ENCODE measurements at regions of chr6 and their contacts with region 1.

Region 1: GRCh38 chr6:41683510-41684310 is 45.4 kb downstream of the MDFI start:
- DNase-seq: peak; percentile 81 to 86
- ATAC-seq: peak; percentile 81 to 89 (median 85)
- H3K4me3 ChIP-seq: peak overlapping the region; percentile 15 to 68 (median 54)
- H3K27ac ChIP-seq: peak overlapping the region; percentile 53 to 97 (median 86)
- H3K4me1 ChIP-seq: peaks cover 5 to 37% (median 23%) of the 10 kb centered on the region in 9 donors
- H3K27me3 ChIP-seq: no peaks in the 10 kb centered on the region
- CTCF ChIP-seq: peak; percentile 88 to 97 (median 96)

Region 2: GRCh38 chr6:41306187-41306854 is 377.4 kb before region 1 on chr6:
- intact Hi-C with region 1: loop called in 1 of 10 experiments (anchors 5 kb)
- DNase-seq: no peak
- ATAC-seq: no peak
- H3K4me3 ChIP-seq: no peak overlapping the region
- H3K27ac ChIP-seq: no peak overlapping the region
- H3K4me1 ChIP-seq: peaks cover 0 to 6% (median 0%) of the 10 kb centered on the region in 9 donors
- H3K27me3 ChIP-seq: peaks cover 0 to 40% (median 26%) of the 10 kb centered on the region in 7 donors
- CTCF ChIP-seq: peak in 8 of 9 donors; percentile 28 to 66 (median 60)

Region 3: GRCh38 chr6:41318654-41319565 is 364.8 kb before region 1 on chr6:
- intact Hi-C with region 1: no loop called
- DNase-seq: peak; percentile 63 to 82
- ATAC-seq: peak; percentile 90 to 98 (median 94)
- H3K4me3 ChIP-seq: peak overlapping the region in 7 of 10 donors; percentile 9 to 36 (median 33)
- H3K27ac ChIP-seq: no peak overlapping the region
- H3K4me1 ChIP-seq: peaks cover 0 to 11% (median 6%) of the 10 kb centered on the region in 9 donors
- H3K27me3 ChIP-seq: peaks cover 0 to 72% (median 61%) of the 10 kb centered on the region in 7 donors
- CTCF ChIP-seq: peak; percentile 99 to 100 (median 100)

Region 4: DNA sequence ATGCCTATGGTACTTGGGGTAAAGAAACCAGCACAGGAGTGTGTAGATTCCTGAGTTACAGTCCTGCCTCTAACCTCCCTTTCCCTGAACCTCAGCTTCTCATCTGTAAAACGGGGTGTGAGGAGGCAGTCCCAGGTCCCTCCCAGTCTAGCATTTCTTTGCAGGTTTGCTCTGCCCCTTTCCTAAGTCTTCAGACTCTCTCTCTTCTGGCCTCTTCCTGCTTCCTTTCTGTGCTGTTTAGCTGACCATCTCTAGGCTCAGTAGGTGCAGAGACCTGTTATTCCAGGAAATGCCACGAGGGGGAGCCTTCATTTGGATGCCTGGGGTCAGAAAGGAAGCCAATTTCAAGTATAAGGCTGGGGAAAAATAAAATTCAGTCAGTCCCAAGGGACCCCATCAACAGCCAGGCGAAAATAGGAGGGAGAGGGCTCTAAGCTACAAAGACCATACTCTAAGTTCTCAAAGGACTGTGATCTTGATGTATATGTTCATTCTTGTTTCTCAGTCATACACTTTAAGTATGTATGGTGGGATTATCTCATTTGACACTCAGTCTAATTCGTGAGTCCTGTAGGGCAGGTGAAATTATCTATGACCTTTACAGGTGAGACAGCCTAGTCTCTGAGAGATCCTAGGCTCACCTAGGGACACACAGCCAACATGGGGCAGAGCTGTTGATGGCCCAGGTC is 259.2 kb before region 1 on chr6:
- intact Hi-C with region 1: loop called in 1 of 10 experiments (anchors 5 kb)
- DNase-seq: peak; percentile 58 to 88
- ATAC-seq: peak in 6 of 8 donors; percentile 34 to 67 (median 46)
- H3K4me3 ChIP-seq: no peak overlapping the region
- H3K27ac ChIP-seq: no peak overlapping the region
- H3K4me1 ChIP-seq: peaks cover 3 to 39% (median 28%) of the 10 kb centered on the region in 9 donors
- H3K27me3 ChIP-seq: peaks cover 0 to 51% (median 15%) of the 10 kb centered on the region in 7 donors
- CTCF ChIP-seq: peak; percentile 62 to 91 (median 85)

Region 5: GRCh38 chr6:41463062-41463930 is 220.4 kb before region 1 on chr6:
- intact Hi-C with region 1: loop called in 8 of 10 experiments (anchors 5 to 10 kb)
- DNase-seq: peak; percentile 74
- ATAC-seq: peak; percentile 85 to 96 (median 91)
- H3K4me3 ChIP-seq: no peak overlapping the region
- H3K27ac ChIP-seq: no peak overlapping the region
- H3K4me1 ChIP-seq: peaks cover 0 to 4% (median 0%) of the 10 kb centered on the region in 9 donors
- H3K27me3 ChIP-seq: peaks cover 0 to 13% (median 4%) of the 10 kb centered on the region in 7 donors
- CTCF ChIP-seq: peak; percentile 45 to 85 (median 76)

Region 6: DNA sequence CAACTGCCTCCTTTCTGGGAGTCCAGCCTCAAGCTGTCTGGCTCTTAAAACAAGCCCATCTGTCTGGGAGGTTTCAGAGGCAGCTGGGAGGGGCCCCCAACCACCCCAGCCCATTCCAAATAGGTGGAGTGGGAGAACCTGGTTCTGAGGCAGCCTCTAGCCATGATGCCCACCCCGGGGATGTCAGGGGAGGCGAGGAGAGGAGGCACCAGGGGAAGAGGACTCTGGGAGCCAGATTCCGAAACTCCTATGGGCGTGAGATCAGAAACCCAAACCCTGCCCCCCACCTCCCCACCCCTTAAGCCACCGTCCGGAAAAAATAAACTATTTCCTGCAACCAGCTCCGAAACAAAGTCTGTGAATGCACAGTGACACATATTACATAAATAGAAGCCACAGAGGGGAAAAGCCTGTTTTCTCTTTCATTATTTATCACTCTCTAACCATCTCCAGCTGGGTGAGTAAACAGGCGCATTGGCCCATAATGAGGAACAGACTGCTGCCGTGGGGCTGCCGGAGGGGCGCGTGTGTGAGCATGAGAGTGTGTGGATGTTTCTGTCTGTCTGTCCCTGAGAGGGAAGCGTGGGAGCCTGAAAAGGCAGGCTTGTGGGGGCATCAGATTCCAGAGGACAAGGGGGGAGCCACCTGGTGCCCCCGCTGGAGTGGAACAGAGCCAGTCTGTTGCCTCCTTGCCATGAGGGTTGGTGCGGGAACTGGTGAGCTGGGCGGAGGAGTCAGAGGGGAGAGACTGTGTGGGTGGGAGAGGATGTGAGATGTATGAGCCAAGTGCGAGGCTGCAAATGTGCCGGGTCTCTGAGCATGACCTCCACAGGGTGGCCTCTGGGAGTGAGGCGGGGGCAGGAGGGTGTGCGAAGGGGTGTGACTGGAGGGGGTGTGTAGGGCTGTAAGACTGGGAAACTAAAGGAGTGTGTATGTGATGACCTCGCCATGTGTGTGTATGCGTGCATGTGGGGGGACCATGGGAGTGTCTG is 151.8 kb before region 1 on chr6:
- intact Hi-C with region 1: no loop called
- DNase-seq: no peak
- ATAC-seq: peak in 4 of 8 donors; percentile 35 to 51 (median 38)
- H3K4me3 ChIP-seq: peak overlapping the region in 4 of 10 donors; percentile 8 to 26 (median 18)
- H3K27ac ChIP-seq: peak overlapping the region in 1 of 10 donors; percentile 20
- H3K4me1 ChIP-seq: peaks cover 0 to 25% (median 17%) of the 10 kb centered on the region in 9 donors
- H3K27me3 ChIP-seq: peaks cover 0 to 69% (median 44%) of the 10 kb centered on the region in 7 donors
- CTCF ChIP-seq: no peak

Region 7: DNA sequence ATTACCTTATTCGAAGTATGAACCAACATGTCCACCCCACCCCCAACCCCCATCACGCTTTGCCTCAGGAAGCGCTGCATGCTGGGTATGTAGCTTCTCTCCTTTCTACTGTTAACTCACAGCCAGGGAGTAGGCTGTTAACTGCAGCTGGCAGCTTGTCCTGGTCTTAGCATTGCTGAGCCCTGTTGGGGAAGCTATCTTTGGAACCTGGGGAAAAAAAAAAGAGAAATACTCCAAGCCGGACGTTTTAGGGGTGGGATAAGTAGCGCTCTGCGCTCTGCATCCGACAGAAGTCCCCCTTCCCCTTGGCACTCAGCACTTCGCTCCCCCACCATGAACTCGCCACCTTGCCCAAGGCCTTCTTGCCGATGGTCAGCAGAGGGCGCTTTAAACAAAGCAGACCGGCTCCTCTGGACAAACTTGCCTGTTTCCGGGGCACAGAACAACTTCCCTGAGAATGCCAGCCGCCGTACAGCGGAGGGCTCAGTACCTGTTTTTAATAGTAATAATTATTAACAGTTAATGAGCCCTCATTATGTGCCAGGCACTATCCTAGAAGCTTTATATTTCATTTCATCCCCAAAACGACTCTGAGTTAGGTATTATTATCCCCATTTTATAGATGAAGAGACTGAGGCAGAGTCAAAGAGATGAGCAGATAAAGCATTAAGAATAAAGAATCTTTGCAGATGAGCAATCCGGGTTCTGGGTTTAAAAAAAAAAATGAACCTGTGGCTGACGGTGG is 80.7 kb before region 1 on chr6:
- intact Hi-C with region 1: loop called (anchors 1 to 2 kb)
- DNase-seq: peak; percentile 70 to 88
- ATAC-seq: peak; percentile 73 to 93 (median 84)
- H3K4me3 ChIP-seq: peak overlapping the region in 7 of 10 donors; percentile 5 to 30 (median 24)
- H3K27ac ChIP-seq: peak overlapping the region in 5 of 10 donors; percentile 20 to 49 (median 36)
- H3K4me1 ChIP-seq: peaks cover 0 to 17% (median 8%) of the 10 kb centered on the region in 9 donors
- H3K27me3 ChIP-seq: no peaks in the 10 kb centered on the region
- CTCF ChIP-seq: peak; percentile 84 to 98 (median 90)

Region 8: DNA sequence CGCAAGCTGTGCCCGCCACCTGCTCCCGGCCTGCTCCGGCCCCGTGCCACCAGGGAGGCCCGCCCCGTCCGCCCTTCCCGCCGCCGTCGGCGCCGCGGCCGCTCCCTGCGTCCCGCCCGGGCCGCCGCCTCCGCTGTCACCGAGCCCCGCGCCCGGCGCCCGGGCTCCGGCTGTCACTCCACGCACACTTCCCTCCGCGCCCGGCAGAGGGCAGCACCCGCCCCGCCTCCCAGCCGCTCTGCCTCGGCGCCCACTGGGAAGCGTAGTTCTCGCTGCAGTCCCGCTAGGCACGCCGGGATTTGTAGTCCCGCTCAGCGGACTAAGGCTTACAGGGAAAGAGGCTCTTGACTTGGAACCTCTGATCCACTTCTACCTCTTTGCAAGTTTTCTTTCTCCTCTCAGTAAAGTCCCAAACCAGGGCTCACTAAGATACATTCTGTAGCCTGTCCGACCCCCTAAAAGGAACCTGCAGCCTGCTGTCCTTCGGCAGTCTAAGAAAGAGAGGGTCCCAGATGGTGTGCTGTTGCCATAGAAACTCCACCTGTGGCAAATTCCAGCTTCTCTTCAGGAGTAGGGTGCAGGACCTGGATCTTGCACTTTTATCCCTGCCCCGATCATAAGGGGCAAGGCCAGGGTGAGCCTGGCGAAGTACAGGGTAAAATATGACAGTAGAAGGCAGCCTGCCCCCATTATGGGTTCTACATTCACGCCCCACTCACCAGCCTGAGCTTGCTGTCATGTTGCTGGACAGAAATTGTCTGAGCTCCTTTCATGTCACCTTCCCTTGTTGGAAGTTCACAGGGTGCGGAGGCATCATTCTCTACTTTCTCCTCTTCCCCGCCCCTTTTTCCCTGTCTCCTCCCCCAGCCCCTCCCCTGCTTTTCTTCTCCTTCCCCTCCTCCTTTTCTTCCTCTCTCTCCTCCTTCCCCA is 52.0 kb after region 1 on chr6 and contains the start of gene TFEB:
- intact Hi-C with region 1: loop called in 1 of 10 experiments (anchors 2 kb)
- DNase-seq: peak; percentile 95
- ATAC-seq: peak; percentile 54 to 81 (median 72)
- H3K4me3 ChIP-seq: peak within 1 kb of the TSS; percentile 75 to 99 (median 92)
- H3K27ac ChIP-seq: peak within 1 kb of the TSS; percentile 97 to 100 (median 100)
- H3K4me1 ChIP-seq: peaks cover 11 to 41% (median 36%) of the 10 kb centered on the region in 9 donors
- H3K27me3 ChIP-seq: no peaks in the 10 kb centered on the region
- CTCF ChIP-seq: peak; percentile 85 to 100 (median 88)
- total RNA-seq, gene TFEB: 29.2 to 47.0 (median 39.6) TPM